ENCODE measurements at regions of chr16 and their contacts with region 1.

Region 1: GRCh38 chr16:72847187-72848027 is 200.5 kb downstream of the ZFHX3 start:
- DNase-seq: peak in 1 of 5 donors; percentile 18
- H3K4me3 ChIP-seq: no peak overlapping the region
- H3K27ac ChIP-seq: no peak overlapping the region
- H3K4me1 ChIP-seq: peaks cover 6% of the 10 kb centered on the region
- H3K27me3 ChIP-seq: no peaks in the 10 kb centered on the region
- CTCF ChIP-seq: no peak
- EP300 ChIP-seq: no peak
- POLR2A ChIP-seq: no peak

Region 2: DNA sequence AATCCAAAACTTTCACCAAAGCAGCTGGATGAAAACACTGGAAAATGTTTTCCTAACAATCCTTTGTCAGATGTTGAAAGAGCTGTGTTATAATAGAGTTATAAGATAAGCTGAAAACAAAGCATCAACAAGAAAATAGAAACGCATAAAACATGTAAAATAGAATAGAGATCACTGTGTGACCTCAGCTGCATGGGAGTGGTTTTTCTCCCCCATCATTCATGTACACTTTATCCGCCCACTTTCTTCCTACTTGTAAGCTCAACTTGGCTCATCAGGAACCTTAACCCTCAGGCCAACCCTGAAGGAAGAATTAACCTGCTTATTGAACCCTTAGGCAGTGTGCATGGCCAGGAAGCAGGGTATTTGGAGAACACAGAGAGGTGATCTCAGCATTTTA is 436.9 kb before region 1 on chr16:
- intact Hi-C with region 1: no loop called
- DNase-seq: no peak
- H3K4me3 ChIP-seq: no peak overlapping the region
- H3K27ac ChIP-seq: no peak overlapping the region
- H3K4me1 ChIP-seq: peaks cover 2% of the 10 kb centered on the region
- H3K27me3 ChIP-seq: peaks cover 2% of the 10 kb centered on the region
- CTCF ChIP-seq: no peak
- EP300 ChIP-seq: no peak
- POLR2A ChIP-seq: no peak

Region 3: GRCh38 chr16:72947379-72948237 is 100.2 kb after region 1 on chr16:
- intact Hi-C with region 1: loop called in 1 of 4 experiments (anchors 10 kb)
- DNase-seq: no peak
- H3K4me3 ChIP-seq: no peak overlapping the region
- H3K27ac ChIP-seq: no peak overlapping the region
- H3K4me1 ChIP-seq: peaks cover 2% of the 10 kb centered on the region
- H3K27me3 ChIP-seq: no peaks in the 10 kb centered on the region
- CTCF ChIP-seq: no peak
- EP300 ChIP-seq: no peak
- POLR2A ChIP-seq: no peak

Region 4: DNA sequence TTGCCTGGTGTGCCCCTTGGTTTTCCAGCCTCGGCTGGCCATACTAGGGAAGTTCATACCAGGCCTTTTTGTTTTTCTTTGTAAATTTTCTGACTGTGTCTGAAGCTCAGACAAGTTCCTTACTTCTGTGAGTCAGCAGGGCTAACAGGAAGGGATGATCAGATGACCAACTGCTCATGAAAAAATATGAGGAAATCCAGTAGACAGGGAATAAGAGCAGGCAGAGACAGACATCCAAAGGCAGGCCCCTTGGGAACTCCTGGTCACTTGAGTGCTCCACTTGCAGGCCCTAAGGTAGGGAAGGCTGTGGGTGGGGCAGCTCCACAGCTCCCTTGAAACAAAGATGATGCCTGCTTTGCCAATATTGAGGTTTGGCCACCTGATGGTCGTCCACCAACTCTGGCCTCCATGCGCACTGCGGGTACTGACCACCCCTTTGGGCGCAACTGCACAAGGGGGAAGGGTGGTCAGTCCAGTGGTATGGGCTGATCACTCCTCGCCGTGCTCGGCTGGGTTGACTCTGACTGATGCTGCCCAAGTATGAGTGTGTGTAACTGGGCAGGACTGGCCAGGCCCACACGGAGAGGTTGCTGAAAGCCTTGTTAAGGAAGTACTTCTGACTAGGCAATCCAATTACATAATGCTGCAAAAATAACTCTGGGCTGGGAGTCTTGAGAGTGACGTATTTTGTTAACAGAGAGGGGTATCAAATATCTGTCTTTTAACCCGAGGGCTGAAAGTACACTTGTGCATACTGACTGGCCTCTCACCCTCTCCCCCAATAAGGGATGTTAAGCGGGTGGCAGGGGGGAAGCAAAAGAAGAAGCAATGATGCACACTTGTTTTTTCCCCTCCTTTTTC is 221.4 kb after region 1 on chr16:
- intact Hi-C with region 1: loop called in 1 of 4 experiments (anchors 5 kb)
- DNase-seq: no peak
- H3K4me3 ChIP-seq: no peak overlapping the region
- H3K27ac ChIP-seq: peak overlapping the region in 1 of 2 donors; percentile 26
- H3K4me1 ChIP-seq: peaks cover 2% of the 10 kb centered on the region
- H3K27me3 ChIP-seq: no peaks in the 10 kb centered on the region
- CTCF ChIP-seq: no peak
- EP300 ChIP-seq: no peak
- POLR2A ChIP-seq: no peak